Heart right ventricle (tissue), 16 donors: ENCODE measurements at regions of chr2 and their contacts with region 1.

Region 1: DNA sequence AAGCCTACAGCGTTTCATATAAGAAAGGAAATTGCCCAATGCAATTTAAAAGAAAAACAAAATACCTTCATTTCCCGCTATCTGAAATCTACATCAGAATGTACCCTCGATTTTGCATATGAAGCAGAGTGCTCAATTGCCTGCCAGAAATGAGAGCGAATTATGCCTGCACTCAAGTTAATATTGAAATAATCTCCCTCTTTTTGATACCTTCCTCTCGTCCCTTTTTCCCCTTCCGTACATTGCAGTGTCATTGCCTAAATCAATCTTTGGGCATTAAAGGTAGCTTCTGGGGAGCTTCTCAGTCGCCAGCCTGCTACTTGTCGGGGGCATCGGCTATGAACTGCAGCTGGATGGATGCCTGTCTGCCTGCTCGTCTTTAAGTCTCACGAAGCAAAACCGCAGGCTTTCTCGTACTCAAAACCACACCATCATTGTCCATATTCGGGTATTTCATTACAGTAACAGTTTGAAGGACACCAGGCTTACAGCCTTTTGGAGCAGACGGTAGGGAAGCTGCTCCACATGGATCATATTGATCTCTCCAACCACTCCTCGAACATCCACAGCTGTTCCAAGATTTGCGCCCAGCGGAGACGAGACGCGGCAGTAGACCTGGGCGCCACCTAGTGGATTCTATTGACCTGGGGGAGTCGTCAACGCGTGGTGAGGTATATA is 64.0 kb upstream of the HNRNPA3 start:
- DNase-seq: peak; percentile 57 to 71
- ATAC-seq: peak; percentile 55 to 92 (median 82)
- H3K4me3 ChIP-seq: peak overlapping the region in 9 of 10 donors; percentile 9 to 47 (median 44)
- H3K27ac ChIP-seq: no peak overlapping the region
- H3K4me1 ChIP-seq: peaks cover 0 to 16% (median 8%) of the 10 kb centered on the region in 9 donors
- H3K27me3 ChIP-seq: peaks cover 0 to 85% (median 72%) of the 10 kb centered on the region in 7 donors
- CTCF ChIP-seq: peak; percentile 48 to 87 (median 78)

Region 2: DNA sequence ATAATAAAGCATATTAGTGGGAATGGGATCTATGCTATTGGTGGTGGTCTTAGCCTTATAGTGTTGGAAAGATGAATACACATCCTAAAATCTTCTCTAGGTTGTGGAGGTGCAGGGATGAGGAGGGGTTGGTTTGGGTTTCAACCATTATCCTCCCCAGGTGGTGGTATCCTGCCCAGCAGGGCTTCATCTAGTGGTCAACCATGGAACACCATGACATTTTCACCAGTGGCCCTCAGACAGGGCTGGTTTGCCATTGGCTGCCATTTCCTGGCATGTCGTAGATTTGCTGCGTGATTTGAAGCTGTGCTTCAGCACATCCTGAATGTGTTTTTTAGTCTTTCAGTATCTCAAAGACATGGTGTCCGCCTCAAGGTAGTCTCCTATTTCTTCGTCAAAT is 327.3 kb before region 1 on chr2:
- intact Hi-C with region 1: loop called in 1 of 10 experiments (anchors 10 kb)
- DNase-seq: no peak
- ATAC-seq: no peak
- H3K4me3 ChIP-seq: no peak overlapping the region
- H3K27ac ChIP-seq: no peak overlapping the region
- H3K4me1 ChIP-seq: no peaks in the 10 kb centered on the region
- H3K27me3 ChIP-seq: peaks cover 0 to 61% (median 20%) of the 10 kb centered on the region in 7 donors
- CTCF ChIP-seq: no peak